Activated T-helper 2 cell treated with anti-CD3 and anti-CD28 coated beads, Interferon-gamma antibody, Interleukin-2, Interleukin-4, amounts not matched to agents 10 μg/mL and 5 μg/mL and 100 μg/mL, durations not matched to agents 14 hours and 24 hours and 36 hours (primary cell): ENCODE measurements at regions of chr12 and their contacts with region 1.

Region 1: GRCh38 chr12:14167005-14167628 is 185.7 kb upstream of the GRIN2B start:
- DNase-seq: peak; percentile 11
- H3K4me3 Mint-ChIP-seq: no peak overlapping the region
- H3K27ac Mint-ChIP-seq: no peak overlapping the region
- H3K4me1 Mint-ChIP-seq: no peaks in the 10 kb centered on the region
- H3K27me3 Mint-ChIP-seq: peaks cover 12% of the 10 kb centered on the region

Region 2: DNA sequence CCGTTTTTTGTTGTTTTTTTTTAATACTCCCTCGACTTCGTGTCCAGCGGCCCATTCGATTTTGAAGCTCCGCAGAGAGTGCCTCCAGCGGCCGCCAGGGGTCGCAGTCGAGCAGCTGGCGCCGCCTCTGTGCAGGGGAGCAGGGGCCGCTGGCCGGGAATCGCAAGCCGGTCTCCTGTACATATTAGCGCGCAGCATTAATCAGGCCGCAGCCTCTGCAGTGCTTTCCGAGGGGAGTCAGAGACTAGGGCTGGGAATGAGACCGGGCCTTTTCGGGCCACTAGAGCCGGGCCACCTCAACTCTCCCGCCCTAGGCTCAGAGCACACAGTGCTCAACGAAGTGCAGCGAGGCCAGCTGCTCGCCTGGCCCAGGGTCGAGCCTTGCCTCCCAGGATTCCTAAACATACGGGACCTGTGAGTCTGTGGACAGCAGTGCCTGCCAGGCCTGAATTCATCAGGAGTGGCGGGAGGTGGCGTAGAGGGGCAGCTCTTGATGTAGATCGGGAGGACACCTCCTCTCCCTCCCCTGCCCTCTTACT is 888.8 kb before region 1 on chr12:
- intact Hi-C with region 1: loop called (anchors 5 kb)
- DNase-seq: peak; percentile 34
- H3K4me3 Mint-ChIP-seq: no peak overlapping the region
- H3K27ac Mint-ChIP-seq: no peak overlapping the region
- H3K4me1 Mint-ChIP-seq: peaks cover 3% of the 10 kb centered on the region
- H3K27me3 Mint-ChIP-seq: peaks cover 28% of the 10 kb centered on the region

Region 3: GRCh38 chr12:13362260-13362841 is 804.8 kb before region 1 on chr12:
- intact Hi-C with region 1: loop called (anchors 10 kb)
- DNase-seq: no peak
- H3K4me3 Mint-ChIP-seq: no peak overlapping the region
- H3K27ac Mint-ChIP-seq: no peak overlapping the region
- H3K4me1 Mint-ChIP-seq: no peaks in the 10 kb centered on the region
- H3K27me3 Mint-ChIP-seq: peaks cover 34% of the 10 kb centered on the region

Region 4: GRCh38 chr12:13864081-13864673 is 302.9 kb before region 1 on chr12:
- intact Hi-C with region 1: loop called (anchors 1 kb)
- DNase-seq: peak; percentile 21
- H3K4me3 Mint-ChIP-seq: no peak overlapping the region
- H3K27ac Mint-ChIP-seq: no peak overlapping the region
- H3K4me1 Mint-ChIP-seq: no peaks in the 10 kb centered on the region
- H3K27me3 Mint-ChIP-seq: no peaks in the 10 kb centered on the region